Right ventricle myocardium inferior (tissue), 1 donor: ENCODE measurements at regions of chr16 and their contacts with region 1.

Region 1: DNA sequence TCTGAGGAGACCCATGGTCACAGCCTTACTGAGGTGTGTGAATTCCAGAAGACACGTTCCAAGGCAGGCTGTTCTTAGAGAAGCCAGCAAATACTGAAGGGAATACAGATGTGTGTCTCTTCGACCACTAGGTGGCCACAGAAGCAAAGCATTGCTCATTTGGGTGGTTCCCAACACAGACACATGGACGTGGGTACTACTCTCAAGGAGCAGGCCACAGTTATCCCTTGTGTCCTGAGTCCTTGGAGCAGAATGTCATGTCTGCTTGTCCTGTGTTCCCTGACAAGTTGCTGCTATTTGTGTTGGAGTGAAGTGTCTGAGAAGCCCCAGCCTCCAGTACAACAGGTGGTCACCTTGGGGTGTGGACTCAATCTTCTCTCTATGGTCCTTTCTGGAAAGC is 30.3 kb downstream of the HMOX2 start:
- DNase-seq: no peak
- ATAC-seq: peak; percentile 69

Region 2: DNA sequence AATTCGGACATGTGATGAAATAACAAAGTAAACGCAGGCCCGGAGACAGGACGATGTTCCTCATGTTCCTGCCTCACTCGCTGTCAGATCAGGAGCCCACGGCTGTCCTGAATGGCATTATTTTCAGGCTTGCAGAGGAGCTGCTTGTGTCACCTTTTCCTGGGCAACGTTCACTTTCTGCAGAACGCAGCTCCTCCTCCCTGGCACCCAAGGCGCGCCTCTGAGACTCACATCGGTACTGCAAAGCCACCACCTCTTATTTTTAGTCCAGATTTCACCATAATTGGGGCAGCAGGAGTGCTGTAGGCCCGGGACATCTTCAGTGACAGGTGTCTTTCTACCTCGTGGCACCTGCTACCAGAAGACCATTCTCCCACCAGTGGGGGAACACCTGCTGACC is 41.7 kb after region 1 on chr16:
- intact Hi-C with region 1: loop called (anchors 2 kb)
- DNase-seq: no peak
- ATAC-seq: no peak

Region 3: DNA sequence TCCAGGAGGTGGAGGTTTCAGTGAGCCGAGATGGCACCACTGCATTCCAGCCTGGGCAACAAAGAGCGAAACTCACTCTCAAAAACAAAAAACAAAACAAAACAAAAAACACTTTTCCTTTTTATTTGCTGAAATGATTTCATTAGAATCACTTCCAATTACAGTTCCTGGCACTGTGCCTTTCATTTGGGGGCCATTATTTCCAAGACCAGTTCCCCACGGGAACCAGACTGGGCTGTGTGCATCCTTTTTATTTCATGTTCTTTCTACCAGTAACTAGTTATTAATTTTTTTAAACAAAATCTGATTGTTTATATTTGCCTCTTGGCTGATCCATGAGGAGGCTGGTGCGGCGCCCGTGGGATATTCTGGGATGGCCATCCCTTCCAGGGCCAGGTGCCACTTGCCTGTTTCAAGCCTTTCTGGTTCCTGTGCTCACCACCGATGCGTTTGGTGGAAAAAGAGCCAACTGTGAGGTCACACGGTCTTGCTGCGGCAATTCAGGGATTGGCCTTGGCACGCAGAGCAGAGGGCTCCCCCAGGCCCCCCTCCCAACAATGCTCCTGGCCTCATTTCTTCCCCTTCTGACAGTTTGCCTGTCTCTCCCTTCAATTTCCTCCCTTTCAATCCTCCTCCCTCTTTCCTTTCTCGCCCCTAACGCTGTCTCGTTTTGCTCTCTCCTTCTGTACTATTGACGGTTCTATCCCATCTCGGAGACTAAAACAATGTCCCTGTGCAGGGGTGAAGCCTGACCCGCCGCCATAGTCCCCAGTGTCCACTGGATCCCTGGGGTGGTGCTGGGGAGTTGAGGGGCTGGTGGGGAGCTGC is 94.8 kb after region 1 on chr16:
- intact Hi-C with region 1: no loop called
- DNase-seq: no peak
- ATAC-seq: peak; percentile 49

Region 4: DNA sequence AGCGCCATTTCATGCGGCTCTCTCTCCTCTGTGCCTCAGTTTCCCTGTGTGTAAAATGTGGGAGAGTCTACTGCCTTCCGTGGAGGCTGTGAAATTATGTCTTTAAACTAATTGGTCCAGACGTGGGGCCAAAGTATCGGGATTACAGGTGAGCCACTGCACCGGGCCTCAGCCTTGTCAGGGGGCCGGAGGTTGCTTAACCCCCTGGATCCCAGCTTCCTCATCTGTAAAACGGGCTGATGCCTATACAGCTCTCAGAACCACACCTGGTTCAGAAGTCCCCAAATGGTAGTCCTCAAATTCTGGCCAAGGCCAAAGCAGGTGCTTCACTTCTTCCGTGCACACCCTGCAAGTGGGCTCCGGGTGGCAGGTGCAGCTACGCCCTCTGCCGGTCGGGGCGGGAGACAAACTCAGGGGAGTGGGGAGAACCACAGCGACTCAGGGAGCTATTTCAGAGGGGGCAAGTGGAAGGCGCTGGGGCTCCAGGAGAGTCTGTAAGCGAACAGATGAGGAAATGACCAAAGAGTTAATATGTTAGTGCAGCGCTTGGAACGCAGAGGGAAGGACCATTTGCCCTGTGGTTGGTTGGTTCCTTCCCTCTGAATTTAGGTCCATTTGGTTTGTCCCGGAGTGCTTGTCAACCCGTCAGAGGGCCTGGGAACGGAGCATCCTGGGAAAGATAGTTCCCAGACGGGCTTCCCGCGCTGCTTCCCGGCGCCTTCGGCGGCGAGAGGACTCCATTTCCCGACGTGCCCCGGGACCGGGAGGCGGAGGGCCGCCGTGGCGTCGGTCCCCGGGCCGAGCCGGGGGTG is 117.8 kb after region 1 on chr16 and contains the start of gene MGRN1:
- intact Hi-C with region 1: no loop called
- DNase-seq: peak; percentile 95
- ATAC-seq: peak; percentile 99
- total RNA-seq, gene MGRN1: 32.2 TPM